ENCODE measurements at regions of chr12 and their contacts with region 1.

Region 1: GRCh38 chr12:26126340-26127284 is 1.8 kb upstream of the BHLHE41 start:
- DNase-seq: peak; percentile 28
- ATAC-seq: peak; percentile 76
- H3K4me3 ChIP-seq: peak overlapping the region; percentile 39 to 66 (median 54)
- H3K27ac ChIP-seq: no peak overlapping the region
- H3K4me1 ChIP-seq: peaks cover 20% of the 10 kb centered on the region
- H3K27me3 ChIP-seq: peaks cover 20 to 74% of the 10 kb centered on the region in 2 experiments
- CTCF ChIP-seq: no peak
- EP300 ChIP-seq: no peak
- POLR2A ChIP-seq: no peak
- RAD21 ChIP-seq: no peak

Region 2: GRCh38 chr12:26318661-26319068 is 192.1 kb after region 1 on chr12:
- CTCF ChIA-PET with region 1: no interaction called
- POLR2A ChIA-PET with region 1: no interaction called
- in situ Hi-C with region 1: loop called (anchors 10 kb)
- intact Hi-C with region 1: no loop called
- DNase-seq: peak; percentile 73
- ATAC-seq: peak; percentile 100
- H3K4me3 ChIP-seq: peak overlapping the region in 1 of 3 experiments; percentile 23; a peak in 2 of 6 replicates
- H3K27ac ChIP-seq: no peak overlapping the region
- H3K4me1 ChIP-seq: peaks cover 25% of the 10 kb centered on the region
- H3K27me3 ChIP-seq: no peaks in the 10 kb centered on the region
- CTCF ChIP-seq: no peak
- EP300 ChIP-seq: peak in 1 of 2 experiments; percentile 39; a peak in 1 of 4 replicates
- POLR2A ChIP-seq: no peak
- RAD21 ChIP-seq: no peak

Measured in HepG2 (cell line).